ENCODE measurements at regions of chr4 and their contacts with region 1.

Region 1: DNA sequence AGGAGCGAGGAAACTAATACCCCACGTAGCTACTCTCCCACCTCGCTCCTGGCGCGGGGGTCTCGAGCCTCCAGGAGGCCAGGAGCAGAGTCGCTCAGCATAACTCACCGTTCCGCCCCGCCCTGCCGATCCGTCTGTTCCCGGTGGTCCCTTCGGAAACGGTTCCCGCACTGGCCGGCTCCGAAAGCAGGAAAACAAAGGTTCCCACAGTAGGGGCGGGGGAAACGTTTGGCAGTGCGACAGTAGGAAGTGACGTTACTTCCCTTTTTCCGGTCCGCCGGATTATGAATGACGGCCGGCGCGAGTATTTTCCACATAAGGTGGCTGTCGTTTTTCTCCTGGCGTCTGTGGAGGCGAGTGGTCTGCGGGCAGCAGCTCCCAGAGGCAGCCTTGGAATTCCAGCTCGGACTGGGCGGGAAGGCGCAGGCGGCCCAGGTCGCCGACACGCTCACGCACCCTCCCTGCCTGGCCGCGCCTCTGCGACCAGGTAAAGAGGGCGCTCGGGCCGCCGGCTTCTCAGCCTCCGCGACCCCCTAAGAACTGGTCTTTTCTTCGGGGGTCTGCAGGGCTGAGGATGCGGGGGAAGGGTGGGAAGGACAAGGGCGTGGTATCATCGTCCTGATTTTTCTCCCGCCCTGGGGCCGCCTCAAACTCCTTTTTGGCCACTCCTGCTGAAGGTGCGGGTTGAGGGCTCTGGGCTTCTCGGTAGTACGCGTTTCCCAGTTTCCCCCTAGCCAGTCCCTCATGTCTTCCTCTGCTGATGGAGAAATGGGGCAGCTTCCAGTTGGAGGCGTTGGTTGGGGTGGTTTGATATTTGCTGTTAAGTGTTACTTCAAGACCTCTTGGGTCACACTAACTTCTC is at the starts of genes GSTCD and INTS12:
- DNase-seq: peak; percentile 71 to 92 (median 82)
- ATAC-seq: peak; percentile 91 to 94 (median 92)
- H3K4me3 ChIP-seq: peak within 1 kb of the TSS; percentile 86 to 96
- H3K4me3 Mint-ChIP-seq: peak within 1 kb of the TSS; percentile 91 to 99 (median 99)
- H3K27ac ChIP-seq: peak within 1 kb of the TSS; percentile 52
- H3K27ac Mint-ChIP-seq: peak within 1 kb of the TSS; percentile 94 to 98
- H3K4me1 ChIP-seq: peaks cover 3 to 16% of the 10 kb centered on the region in 2 experiments
- H3K4me1 Mint-ChIP-seq: peaks cover 29 to 33% (median 31%) of the 10 kb centered on the region in 3 donors
- H3K27me3 ChIP-seq: no peaks in the 10 kb centered on the region
- H3K27me3 Mint-ChIP-seq: no peaks in the 10 kb centered on the region
- total RNA-seq, gene GSTCD: 5.1 to 7.5 (median 5.2) TPM
- total RNA-seq, gene INTS12: 14.5 to 23.8 (median 17.3) TPM

Region 2: GRCh38 chr4:105170711-105171110 is 538.0 kb before region 1 on chr4:
- CTCF ChIA-PET with region 1: interaction called in 1 of 2 experiments, 11 read pairs
- POLR2A ChIA-PET with region 1: no interaction called
- DNase-seq: no peak
- ATAC-seq: no peak
- H3K4me3 ChIP-seq: no peak overlapping the region
- H3K4me3 Mint-ChIP-seq: no peak overlapping the region
- H3K27ac ChIP-seq: no peak overlapping the region
- H3K27ac Mint-ChIP-seq: no peak overlapping the region
- H3K4me1 ChIP-seq: no peaks in the 10 kb centered on the region
- H3K4me1 Mint-ChIP-seq: peaks cover 20 to 27% (median 26%) of the 10 kb centered on the region in 3 donors
- H3K27me3 ChIP-seq: no peaks in the 10 kb centered on the region
- H3K27me3 Mint-ChIP-seq: no peaks in the 10 kb centered on the region

Region 3: DNA sequence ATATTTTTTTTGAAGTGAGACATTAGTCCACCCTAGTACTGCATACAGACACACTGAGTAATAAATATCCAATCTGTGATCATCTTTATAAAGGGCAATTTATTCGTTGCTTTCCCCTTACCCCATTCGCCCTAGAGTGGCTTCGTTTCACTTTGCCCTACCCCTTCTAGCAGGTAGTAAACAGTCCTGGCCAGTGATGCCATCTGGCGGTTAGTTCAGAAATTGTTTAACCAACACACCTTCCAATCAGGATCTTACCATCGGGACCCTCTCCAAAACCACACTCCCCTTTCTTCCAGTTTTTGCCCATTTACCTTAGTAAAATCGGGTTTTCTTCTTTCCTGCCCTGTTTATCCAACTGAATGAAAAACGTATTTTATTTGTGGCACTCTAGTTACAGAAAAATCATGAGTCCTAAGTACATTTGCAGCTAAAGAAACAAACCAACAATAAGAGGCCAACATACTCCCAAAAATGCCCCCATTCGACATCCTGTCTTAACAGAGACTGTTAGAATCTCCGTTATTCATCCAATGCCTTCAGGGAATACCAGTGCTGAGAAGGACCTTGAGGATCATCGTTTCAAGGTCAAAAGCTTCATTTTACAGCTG is 237.1 kb before region 1 on chr4:
- CTCF ChIA-PET with region 1: interaction called, 3 to 12 read pairs
- POLR2A ChIA-PET with region 1: no interaction called
- DNase-seq: peak; percentile 5 to 86 (median 61)
- ATAC-seq: peak; percentile 31 to 43 (median 37)
- H3K4me3 ChIP-seq: no peak overlapping the region
- H3K4me3 Mint-ChIP-seq: peak overlapping the region; percentile 60 to 99 (median 99)
- H3K27ac ChIP-seq: peak overlapping the region; percentile 17
- H3K27ac Mint-ChIP-seq: peak overlapping the region; percentile 13 to 34
- H3K4me1 ChIP-seq: peaks cover 8 to 20% of the 10 kb centered on the region in 2 experiments
- H3K4me1 Mint-ChIP-seq: peaks cover 60 to 75% (median 60%) of the 10 kb centered on the region in 3 donors
- H3K27me3 ChIP-seq: no peaks in the 10 kb centered on the region
- H3K27me3 Mint-ChIP-seq: no peaks in the 10 kb centered on the region

Region 4: GRCh38 chr4:105741548-105741947 is 32.8 kb after region 1 on chr4:
- CTCF ChIA-PET with region 1: no interaction called
- POLR2A ChIA-PET with region 1: interaction called in 1 of 2 experiments, 16 read pairs
- DNase-seq: no peak
- ATAC-seq: no peak
- H3K4me3 ChIP-seq: no peak overlapping the region
- H3K4me3 Mint-ChIP-seq: no peak overlapping the region
- H3K27ac ChIP-seq: no peak overlapping the region
- H3K27ac Mint-ChIP-seq: no peak overlapping the region
- H3K4me1 ChIP-seq: no peaks in the 10 kb centered on the region
- H3K4me1 Mint-ChIP-seq: no peaks in the 10 kb centered on the region
- H3K27me3 ChIP-seq: no peaks in the 10 kb centered on the region
- H3K27me3 Mint-ChIP-seq: no peaks in the 10 kb centered on the region

Measured in T-cell (primary cell).